ENCODE measurements at regions of chr2 and their contacts with region 1.

Region 1: DNA sequence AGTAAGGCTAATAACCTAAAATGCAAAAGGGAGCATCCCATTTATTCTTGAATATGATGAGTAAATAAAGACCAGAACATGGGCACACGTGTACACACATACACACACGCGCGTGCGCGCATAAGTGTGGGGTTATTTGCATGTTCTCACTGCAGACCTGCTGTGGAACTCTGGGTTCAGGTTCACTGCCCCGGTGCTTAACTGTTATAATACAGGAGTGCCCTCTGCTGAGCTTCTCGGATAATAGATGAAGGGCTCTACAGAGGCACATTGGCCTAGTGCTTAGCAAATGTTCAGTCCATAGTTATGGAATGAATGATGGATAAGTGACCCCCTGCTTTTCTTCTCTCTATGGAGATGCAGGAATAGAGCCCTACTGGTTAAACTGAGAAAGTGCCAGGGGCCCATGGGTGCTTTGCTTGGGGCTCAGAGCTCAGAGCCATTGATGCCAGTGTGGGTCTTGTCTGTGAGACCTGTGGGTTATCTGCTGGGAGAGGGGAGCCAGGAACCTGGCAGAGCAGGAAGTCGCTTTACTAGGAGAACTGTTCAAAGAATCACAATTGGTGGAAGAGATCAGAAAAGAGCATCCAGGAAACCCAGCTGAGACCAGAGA is 3.6 kb upstream of the ARL4C start:
- DNase-seq: peak; percentile 81
- H3K4me3 Mint-ChIP-seq: no peak overlapping the region
- H3K27ac Mint-ChIP-seq: peak overlapping the region; percentile 65
- H3K4me1 Mint-ChIP-seq: peaks cover 31% of the 10 kb centered on the region
- H3K27me3 Mint-ChIP-seq: peaks cover 12% of the 10 kb centered on the region

Region 2: GRCh38 chr2:233990261-233990798 is 510.2 kb before region 1 on chr2:
- CTCF ChIA-PET with region 1: no interaction called
- POLR2A ChIA-PET with region 1: interaction called, 24 read pairs
- DNase-seq: peak; percentile 89
- H3K4me3 Mint-ChIP-seq: peak overlapping the region; percentile 24
- H3K27ac Mint-ChIP-seq: peak overlapping the region; percentile 31
- H3K4me1 Mint-ChIP-seq: peaks cover 45% of the 10 kb centered on the region
- H3K27me3 Mint-ChIP-seq: peaks cover 12% of the 10 kb centered on the region

Region 3: DNA sequence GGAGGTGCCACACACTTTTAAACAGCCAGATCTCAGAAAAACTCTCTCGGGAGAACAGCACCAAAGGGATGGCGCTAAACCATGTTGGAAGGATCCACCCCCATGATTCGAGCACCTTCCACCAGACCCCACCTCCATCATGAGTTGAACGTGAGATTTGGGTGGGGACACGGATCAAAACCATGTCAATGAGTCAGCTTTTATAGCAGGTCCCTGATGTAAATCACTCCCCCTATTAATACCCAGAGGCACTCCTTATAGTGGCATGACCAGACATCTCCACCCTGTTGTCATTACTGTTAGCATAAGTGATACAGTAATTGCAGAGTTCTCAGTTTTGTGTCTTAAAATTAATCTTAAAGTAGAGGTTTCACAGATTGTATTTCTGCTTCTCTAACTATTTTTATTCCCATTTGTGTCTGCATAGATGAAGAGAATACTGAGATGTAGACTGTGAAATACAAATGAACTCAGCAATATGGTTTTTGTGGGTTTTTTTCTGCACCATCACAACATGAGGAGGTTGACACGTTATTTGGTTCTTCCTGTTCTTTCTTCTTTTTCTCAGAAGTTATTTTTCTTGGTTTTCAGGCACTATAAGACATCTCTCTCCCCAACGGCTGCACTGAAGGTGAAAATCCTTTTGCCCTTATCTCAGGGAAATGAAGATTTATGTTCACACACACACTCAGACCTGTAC is 221.8 kb before region 1 on chr2:
- CTCF ChIA-PET with region 1: interaction called, 6 read pairs
- POLR2A ChIA-PET with region 1: interaction called, 572 read pairs
- DNase-seq: peak; percentile 39
- H3K4me3 Mint-ChIP-seq: no peak overlapping the region
- H3K27ac Mint-ChIP-seq: peak overlapping the region; percentile 89
- H3K4me1 Mint-ChIP-seq: peaks cover 79% of the 10 kb centered on the region
- H3K27me3 Mint-ChIP-seq: no peaks in the 10 kb centered on the region

Region 4: DNA sequence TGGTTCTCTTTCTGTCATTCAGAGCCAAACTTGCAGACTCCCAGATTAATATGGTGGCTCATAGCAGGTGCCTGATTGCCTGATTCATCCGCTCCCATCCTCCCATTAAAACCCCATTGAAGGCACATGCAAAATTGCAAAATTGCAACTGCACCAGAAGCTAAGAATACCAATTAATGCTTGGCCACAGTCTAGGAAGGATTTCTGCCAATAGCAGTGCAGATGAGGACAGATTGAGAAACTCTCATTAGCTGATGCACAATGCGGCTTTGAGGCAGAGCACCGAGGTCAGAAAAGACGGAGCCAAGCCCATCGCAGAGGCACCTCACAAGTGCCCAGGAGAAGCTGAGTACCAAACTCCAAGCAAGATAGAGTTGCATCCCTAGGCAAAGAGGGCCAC is 176.4 kb before region 1 on chr2:
- CTCF ChIA-PET with region 1: no interaction called
- POLR2A ChIA-PET with region 1: interaction called, 10 read pairs
- DNase-seq: no peak
- H3K4me3 Mint-ChIP-seq: no peak overlapping the region
- H3K27ac Mint-ChIP-seq: peak overlapping the region; percentile 58
- H3K4me1 Mint-ChIP-seq: peaks cover 48% of the 10 kb centered on the region
- H3K27me3 Mint-ChIP-seq: no peaks in the 10 kb centered on the region

Region 5: DNA sequence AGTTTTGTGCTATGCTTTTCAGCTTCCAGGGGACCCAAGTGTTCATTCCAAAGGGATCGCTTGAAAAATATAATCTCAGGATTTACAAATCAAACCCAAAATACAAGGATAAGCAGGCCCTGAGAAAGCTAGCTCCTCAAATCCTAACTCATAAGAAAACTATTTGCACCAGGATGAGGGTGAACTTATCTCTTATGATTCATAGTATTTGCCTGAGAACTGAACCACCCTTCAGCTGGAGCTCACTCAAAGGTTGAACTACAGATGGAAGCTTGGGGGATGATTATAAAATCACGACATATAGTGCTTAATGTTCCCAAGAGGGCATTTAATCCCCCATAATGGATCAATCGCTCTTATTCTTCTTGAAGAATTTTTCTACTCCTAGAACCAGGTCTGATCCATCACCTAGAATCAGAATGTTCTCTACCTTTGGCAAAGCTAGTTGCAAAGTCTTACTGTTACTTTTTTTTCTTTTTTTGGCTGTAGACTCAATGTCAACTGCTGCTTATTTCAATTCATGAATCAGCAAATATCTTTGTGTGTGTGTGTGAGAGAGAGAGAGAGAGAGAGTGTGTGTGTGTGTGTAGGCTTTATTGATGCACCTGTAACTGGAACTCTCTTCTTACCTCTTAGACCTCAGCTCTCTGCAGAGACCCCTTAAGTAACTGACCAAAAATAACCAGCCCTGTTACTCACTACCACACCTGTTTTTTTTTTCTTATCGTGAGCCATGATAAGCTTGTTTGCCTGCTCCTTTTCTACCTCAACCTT is 48.5 kb before region 1 on chr2:
- CTCF ChIA-PET with region 1: interaction called, 17 read pairs
- POLR2A ChIA-PET with region 1: interaction called, 390 read pairs
- DNase-seq: no peak
- H3K4me3 Mint-ChIP-seq: peak overlapping the region; percentile 72
- H3K27ac Mint-ChIP-seq: peak overlapping the region; percentile 81
- H3K4me1 Mint-ChIP-seq: peaks cover 83% of the 10 kb centered on the region
- H3K27me3 Mint-ChIP-seq: no peaks in the 10 kb centered on the region

Region 6: GRCh38 chr2:234488913-234489451 is 11.5 kb before region 1 on chr2:
- CTCF ChIA-PET with region 1: interaction called, 7 read pairs
- POLR2A ChIA-PET with region 1: interaction called, 51 read pairs
- DNase-seq: peak; percentile 87
- H3K4me3 Mint-ChIP-seq: peak overlapping the region; percentile 99
- H3K27ac Mint-ChIP-seq: peak overlapping the region; percentile 100
- H3K4me1 Mint-ChIP-seq: peaks cover 73% of the 10 kb centered on the region
- H3K27me3 Mint-ChIP-seq: no peaks in the 10 kb centered on the region